Calu3 (cell line): ENCODE measurements at regions of chr11 and their contacts with region 1.

Region 1: DNA sequence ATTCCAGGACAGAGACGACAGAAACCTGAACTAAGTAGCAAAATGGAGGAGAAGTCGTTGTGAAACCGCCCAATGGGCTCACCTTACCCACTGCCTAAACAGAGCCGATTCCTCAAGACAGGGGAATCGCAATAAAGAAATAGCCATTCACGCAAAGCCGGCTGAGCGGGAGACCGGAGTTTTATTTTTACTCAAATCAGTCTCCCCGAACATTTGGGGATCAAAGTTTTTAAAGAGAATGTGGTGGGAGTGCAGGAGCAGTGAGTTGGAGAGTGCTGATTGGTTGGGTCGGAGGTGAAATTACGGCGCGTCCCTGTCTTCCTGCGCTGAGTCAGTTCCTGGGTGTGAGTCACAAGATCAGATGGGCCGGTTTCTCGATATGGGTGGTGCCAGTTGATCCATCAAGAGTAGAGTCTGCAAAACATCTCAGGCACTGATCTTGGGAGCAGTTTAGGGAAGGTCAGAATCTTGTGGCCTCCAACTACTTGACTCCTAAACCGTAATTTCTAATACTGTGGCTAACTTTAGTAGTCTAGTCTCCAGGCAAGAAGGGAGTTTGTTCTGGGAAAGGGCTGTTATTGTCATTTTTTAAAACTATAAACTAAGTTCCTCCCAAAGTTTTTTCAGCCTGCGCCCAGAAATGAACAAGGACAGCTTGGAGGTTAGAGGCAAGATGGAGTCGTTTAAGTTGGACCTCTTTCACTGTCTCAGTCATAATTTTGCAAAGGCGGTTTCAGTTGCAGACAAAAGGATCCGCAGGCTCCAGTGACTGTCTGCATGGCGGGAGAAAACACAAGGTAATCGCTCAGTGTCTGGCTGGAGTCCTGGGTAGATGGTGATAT is 34.1 kb downstream of the OR4D9 start:
- DNase-seq: peak; percentile 83
- H3K4me3 Mint-ChIP-seq: peak overlapping the region; percentile 63
- H3K27ac Mint-ChIP-seq: peak overlapping the region; percentile 99
- H3K4me1 Mint-ChIP-seq: peaks cover 44% of the 10 kb centered on the region
- H3K27me3 Mint-ChIP-seq: peaks cover under 1% of the 10 kb centered on the region
- CTCF ChIP-seq: no peak

Region 2: DNA sequence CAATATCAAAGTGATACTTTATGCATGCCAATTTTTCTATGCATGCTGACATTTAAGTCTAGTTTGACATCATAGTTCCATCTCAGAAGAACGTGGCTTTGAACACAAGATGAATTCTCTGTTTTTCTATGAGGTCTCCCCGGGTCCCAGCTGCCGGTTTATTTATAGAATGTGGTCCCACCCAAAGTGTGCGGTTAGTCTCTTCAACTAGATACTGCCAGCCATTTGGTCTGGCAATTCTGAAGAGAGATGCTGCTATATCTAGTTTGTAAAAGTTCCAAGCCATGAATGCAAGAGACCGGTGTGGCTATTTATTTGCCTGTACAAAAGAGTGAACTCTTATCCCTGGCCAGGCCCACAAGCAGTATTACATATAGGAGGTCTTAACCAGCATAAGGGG is 128.4 kb before region 1 on chr11:
- CTCF ChIA-PET with region 1: no interaction called
- intact Hi-C with region 1: no loop called
- DNase-seq: no peak
- H3K4me3 Mint-ChIP-seq: no peak overlapping the region
- H3K27ac Mint-ChIP-seq: no peak overlapping the region
- H3K4me1 Mint-ChIP-seq: no peaks in the 10 kb centered on the region
- H3K27me3 Mint-ChIP-seq: peaks cover 24% of the 10 kb centered on the region
- CTCF ChIP-seq: no peak

Region 3: GRCh38 chr11:59501931-59502330 is 43.5 kb before region 1 on chr11:
- CTCF ChIA-PET with region 1: no interaction called
- intact Hi-C with region 1: no loop called
- DNase-seq: no peak
- H3K4me3 Mint-ChIP-seq: no peak overlapping the region
- H3K27ac Mint-ChIP-seq: no peak overlapping the region
- H3K4me1 Mint-ChIP-seq: no peaks in the 10 kb centered on the region
- H3K27me3 Mint-ChIP-seq: peaks cover 62% of the 10 kb centered on the region
- CTCF ChIP-seq: no peak

Region 4: GRCh38 chr11:59654893-59655292 is 109.5 kb after region 1 on chr11:
- CTCF ChIA-PET with region 1: no interaction called
- intact Hi-C with region 1: no loop called
- DNase-seq: no peak
- H3K4me3 Mint-ChIP-seq: no peak overlapping the region
- H3K27ac Mint-ChIP-seq: no peak overlapping the region
- H3K4me1 Mint-ChIP-seq: peaks cover 2% of the 10 kb centered on the region
- H3K27me3 Mint-ChIP-seq: no peaks in the 10 kb centered on the region
- CTCF ChIP-seq: no peak

Region 5: GRCh38 chr11:59787816-59788215 is 242.4 kb after region 1 on chr11:
- CTCF ChIA-PET with region 1: no interaction called
- intact Hi-C with region 1: loop called (anchors 10 kb)
- DNase-seq: no peak
- H3K4me3 Mint-ChIP-seq: peak overlapping the region; percentile 13
- H3K27ac Mint-ChIP-seq: peak overlapping the region; percentile 78
- H3K4me1 Mint-ChIP-seq: peaks cover 45% of the 10 kb centered on the region
- H3K27me3 Mint-ChIP-seq: no peaks in the 10 kb centered on the region
- CTCF ChIP-seq: no peak

Region 6: GRCh38 chr11:59810189-59810910 is 264.9 kb after region 1 on chr11 and contains the start of gene MRPL16:
- CTCF ChIA-PET with region 1: no interaction called
- intact Hi-C with region 1: loop called (anchors 10 kb)
- DNase-seq: peak; percentile 89
- H3K4me3 Mint-ChIP-seq: peak within 1 kb of the TSS; percentile 90
- H3K27ac Mint-ChIP-seq: peak within 1 kb of the TSS; percentile 87
- H3K4me1 Mint-ChIP-seq: peaks cover 9% of the 10 kb centered on the region
- H3K27me3 Mint-ChIP-seq: no peaks in the 10 kb centered on the region
- CTCF ChIP-seq: no peak
- total RNA-seq, gene MRPL16: 49.8 and 51.2 TPM in 2 replicates